CD4-positive, alpha-beta memory T cell (primary cell): ENCODE measurements at regions of chr6 and their contacts with region 1.

Region 1: DNA sequence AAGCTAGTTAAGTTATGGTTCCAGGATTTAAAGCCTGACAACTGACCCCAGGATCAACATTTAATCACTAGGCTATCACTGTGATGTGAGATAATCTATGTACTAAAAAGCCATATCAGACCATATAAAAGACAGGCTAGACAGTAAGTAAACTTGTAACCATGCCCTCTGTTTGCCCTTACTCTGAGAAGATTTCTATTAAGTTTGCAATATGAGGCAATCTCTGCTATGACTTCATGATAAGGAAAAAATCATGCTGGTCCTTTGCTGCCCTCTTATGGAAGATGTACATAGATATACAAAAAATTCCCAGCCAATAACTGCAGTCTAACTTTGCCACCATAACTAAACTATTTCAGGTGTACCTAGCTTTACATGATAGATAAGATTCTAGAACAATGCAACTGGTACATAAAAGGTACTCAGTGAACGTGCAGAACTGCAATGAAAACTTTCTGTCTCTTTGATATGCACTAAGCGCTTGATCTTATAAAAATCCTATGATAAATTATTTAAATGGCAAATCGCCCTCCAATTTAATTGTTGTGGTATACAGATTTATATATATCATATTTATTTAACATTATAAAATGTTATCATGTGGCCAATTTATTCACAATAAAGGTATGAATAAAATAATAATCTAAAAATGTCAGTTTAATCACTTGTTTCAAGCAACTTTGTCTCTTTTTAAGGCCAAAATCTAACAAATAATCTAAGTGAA is 70.5 kb downstream of the FAM217A start:
- DNase-seq: peak in 4 of 5 donors; percentile 57 to 62 (median 58)
- H3K4me3 ChIP-seq: no peak overlapping the region
- H3K4me3 Mint-ChIP-seq: no peak overlapping the region
- H3K27ac ChIP-seq: no peak overlapping the region
- H3K27ac Mint-ChIP-seq: peak overlapping the region in 5 of 7 donors; percentile 18 to 87 (median 37)
- H3K4me1 ChIP-seq: peaks cover 47% of the 10 kb centered on the region
- H3K4me1 Mint-ChIP-seq: peaks cover 46 to 62% (median 54%) of the 10 kb centered on the region in 4 donors
- H3K27me3 ChIP-seq: no peaks in the 10 kb centered on the region
- H3K27me3 Mint-ChIP-seq: no peaks in the 10 kb centered on the region

Region 2: DNA sequence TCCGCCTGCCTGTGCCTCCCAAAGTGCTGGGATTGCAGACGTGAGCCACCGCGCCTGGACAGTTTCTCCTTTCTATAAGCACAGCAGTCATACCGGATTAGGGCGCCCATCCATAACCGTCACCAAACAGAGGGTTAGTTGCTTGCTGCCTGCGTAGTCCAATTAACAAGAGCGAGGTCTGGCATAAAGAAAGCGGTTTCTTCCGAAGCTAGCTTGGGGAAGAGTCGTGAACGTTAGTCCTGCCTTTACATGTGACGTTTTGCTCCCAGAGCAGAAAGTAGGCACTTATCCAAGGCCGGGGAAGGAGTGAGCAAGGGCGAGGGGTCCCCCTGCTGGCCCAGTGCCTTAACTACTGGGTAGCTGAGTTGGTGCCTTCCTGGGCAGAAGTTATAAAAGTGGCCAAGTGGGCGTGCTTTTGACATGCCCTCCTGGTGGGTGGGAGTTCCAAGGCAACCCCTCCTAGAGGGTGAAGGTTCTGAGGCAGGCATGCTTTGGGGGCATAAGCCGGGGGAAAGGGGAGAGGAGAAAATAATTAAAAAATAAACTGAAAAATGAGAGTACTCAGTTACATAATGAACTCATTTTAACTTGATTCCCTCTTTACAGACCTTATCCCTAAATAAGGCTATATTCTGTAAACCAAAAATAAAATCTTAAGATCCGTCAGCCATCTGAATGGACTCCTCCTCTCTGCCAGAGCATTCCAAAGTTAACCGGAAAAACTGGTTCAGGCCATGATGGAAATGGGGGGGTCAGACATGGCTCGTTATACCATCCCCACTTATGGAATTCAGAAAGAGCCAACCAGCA is 17.6 kb before region 1 on chr6:
- CTCF ChIA-PET with region 1: interaction called, 10 read pairs
- POLR2A ChIA-PET with region 1: interaction called, 3 read pairs
- intact Hi-C with region 1: no loop called
- DNase-seq: peak; percentile 52 to 68 (median 58)
- H3K4me3 ChIP-seq: no peak overlapping the region
- H3K4me3 Mint-ChIP-seq: no peak overlapping the region
- H3K27ac ChIP-seq: no peak overlapping the region
- H3K27ac Mint-ChIP-seq: peak overlapping the region in 4 of 7 donors; percentile 33 to 91 (median 56)
- H3K4me1 ChIP-seq: peaks cover 8% of the 10 kb centered on the region
- H3K4me1 Mint-ChIP-seq: peaks cover 9 to 23% (median 14%) of the 10 kb centered on the region in 4 donors
- H3K27me3 ChIP-seq: no peaks in the 10 kb centered on the region
- H3K27me3 Mint-ChIP-seq: no peaks in the 10 kb centered on the region

Region 3: DNA sequence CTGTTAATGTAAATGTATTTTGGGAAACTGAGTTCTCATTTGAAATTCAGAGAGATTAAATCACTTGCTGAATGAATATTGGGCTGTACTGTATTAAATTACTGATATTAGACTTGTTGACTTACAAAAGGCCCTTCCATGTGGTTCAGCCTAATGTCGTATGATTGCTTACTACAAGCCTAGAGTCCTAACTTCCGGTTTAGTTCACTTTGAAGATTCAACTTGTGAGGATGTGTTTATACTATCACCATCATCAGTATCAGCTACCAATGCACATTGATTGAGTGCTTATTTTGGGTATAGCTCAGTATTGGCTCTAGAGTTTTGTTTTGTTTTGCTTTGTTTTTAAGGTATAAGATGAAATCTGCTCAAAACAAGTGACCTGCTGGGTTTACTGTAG is 22.2 kb after region 1 on chr6:
- CTCF ChIA-PET with region 1: no interaction called
- POLR2A ChIA-PET with region 1: no interaction called
- intact Hi-C with region 1: no loop called
- DNase-seq: peak in 2 of 5 donors; percentile 32 to 38
- H3K4me3 ChIP-seq: no peak overlapping the region
- H3K4me3 Mint-ChIP-seq: peak overlapping the region in 5 of 8 donors; percentile 1 to 59 (median 3)
- H3K27ac ChIP-seq: peak overlapping the region; percentile 36
- H3K27ac Mint-ChIP-seq: peak overlapping the region in 6 of 7 donors; percentile 0 to 86 (median 55)
- H3K4me1 ChIP-seq: peaks cover 77% of the 10 kb centered on the region
- H3K4me1 Mint-ChIP-seq: peaks cover 55 to 84% (median 70%) of the 10 kb centered on the region in 4 donors
- H3K27me3 ChIP-seq: no peaks in the 10 kb centered on the region
- H3K27me3 Mint-ChIP-seq: no peaks in the 10 kb centered on the region